Upper lobe of right lung (tissue), 1 donor: ENCODE measurements at regions of chr11 and their contacts with region 1.

Region 1: DNA sequence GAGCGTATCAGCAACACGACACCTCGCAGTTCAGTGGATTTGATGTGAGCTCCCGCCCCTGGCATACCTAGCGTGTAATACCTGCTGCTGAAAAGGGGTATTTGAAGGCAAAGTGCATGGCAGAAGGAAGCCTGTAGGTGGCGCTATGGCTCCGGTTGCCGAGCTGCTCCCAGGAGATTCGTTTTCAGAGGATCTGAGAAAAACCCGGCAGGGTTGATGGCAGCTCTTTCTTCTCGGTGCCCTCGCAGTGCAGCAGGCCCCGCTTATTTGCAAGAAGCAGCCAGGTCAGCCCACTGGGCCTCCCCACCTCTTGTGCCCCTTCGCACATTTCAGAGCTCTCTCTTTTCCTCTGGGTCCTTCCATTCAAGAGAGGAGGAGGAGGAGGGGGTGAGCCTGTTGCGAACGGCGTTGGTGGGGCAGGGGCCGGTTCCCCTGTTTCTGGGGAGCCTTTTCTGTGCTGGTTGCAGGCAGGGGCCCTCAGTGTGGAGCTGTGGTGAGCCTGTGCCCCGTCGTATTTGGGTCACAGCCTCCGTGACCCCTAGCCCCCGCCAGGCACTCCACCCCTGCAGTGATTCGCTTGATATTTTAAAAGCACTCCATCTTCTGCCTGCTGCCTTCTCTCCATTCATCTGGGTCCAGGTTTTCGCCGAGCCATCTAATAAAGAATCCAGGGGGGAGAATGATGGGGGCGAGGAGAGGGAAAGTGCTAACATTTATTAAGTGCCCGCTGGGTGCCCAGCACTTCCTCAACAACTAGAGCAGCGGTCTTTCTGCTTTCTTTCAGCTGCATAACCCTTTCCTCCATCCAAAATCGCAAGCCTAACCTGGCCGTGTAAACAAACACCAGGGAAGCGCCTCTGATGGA is 85.3 kb upstream of the SYT13 start:
- DNase-seq: peak; percentile 81
- ATAC-seq: peak; percentile 87
- H3K4me3 ChIP-seq: no peak overlapping the region
- H3K27ac ChIP-seq: peak overlapping the region; percentile 6
- H3K4me1 ChIP-seq: peaks cover 7% of the 10 kb centered on the region
- H3K27me3 ChIP-seq: peaks cover 8% of the 10 kb centered on the region
- CTCF ChIP-seq: peak; percentile 93

Region 2: GRCh38 chr11:45665206-45665932 is 293.9 kb after region 1 on chr11 and contains the start of gene CHST1:
- intact Hi-C with region 1: loop called (anchors 10 kb)
- DNase-seq: peak; percentile 76
- ATAC-seq: peak; percentile 73
- H3K4me3 ChIP-seq: peak within 1 kb of the TSS; percentile 57
- H3K27ac ChIP-seq: no peak within 1 kb of the TSS
- H3K4me1 ChIP-seq: peaks cover 13% of the 10 kb centered on the region
- H3K27me3 ChIP-seq: peaks cover 51% of the 10 kb centered on the region
- CTCF ChIP-seq: no peak
- total RNA-seq, gene CHST1: 4.9 TPM